Dorsolateral prefrontal cortex (tissue), 120 donors: ENCODE measurements at regions of chr22 and their contacts with region 1.

Region 1: GRCh38 chr22:33302049-33302545 is 243.9 kb upstream of the SYN3 start:
- DNase-seq: peak; percentile 77 to 93 (median 88)
- H3K4me3 ChIP-seq: peak overlapping the region in 21 of 59 donors; percentile 1 to 49 (median 14)
- H3K27ac ChIP-seq: peak overlapping the region in 26 of 59 donors; percentile 4 to 71 (median 44)
- H3K27me3 ChIP-seq: no peaks in the 10 kb centered on the region
- CTCF ChIP-seq: peak; percentile 62 to 97 (median 94)

Region 2: DNA sequence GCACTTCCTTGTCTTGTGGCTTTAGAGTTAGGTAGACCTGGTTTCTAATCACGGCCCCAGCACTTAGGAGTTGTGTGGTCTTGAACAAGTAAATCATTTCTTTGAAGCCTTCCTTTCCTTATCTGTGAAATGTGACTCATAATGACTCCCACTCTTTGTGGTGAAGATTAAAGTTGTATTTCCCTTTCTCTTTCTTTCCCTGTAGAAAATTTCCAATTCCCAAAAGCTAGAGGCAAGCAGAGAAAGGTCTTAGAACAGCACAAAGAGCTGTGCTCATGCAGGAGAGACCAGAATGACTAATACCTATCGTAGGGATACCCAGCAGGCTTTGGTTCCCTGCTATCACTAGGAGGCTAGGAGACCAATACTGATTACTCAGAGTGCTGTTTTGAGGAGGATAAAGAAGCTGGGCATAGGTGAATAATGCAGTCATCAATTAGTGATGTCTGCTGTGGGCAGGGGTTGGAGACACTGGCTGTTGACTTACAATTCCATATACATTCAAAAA is 26.7 kb after region 1 on chr22:
- intact Hi-C with region 1: no loop called
- DNase-seq: no peak
- H3K4me3 ChIP-seq: no peak overlapping the region
- H3K27ac ChIP-seq: peak overlapping the region in 15 of 59 donors; percentile 1 to 49 (median 20)
- H3K27me3 ChIP-seq: no peaks in the 10 kb centered on the region
- CTCF ChIP-seq: no peak

Region 3: DNA sequence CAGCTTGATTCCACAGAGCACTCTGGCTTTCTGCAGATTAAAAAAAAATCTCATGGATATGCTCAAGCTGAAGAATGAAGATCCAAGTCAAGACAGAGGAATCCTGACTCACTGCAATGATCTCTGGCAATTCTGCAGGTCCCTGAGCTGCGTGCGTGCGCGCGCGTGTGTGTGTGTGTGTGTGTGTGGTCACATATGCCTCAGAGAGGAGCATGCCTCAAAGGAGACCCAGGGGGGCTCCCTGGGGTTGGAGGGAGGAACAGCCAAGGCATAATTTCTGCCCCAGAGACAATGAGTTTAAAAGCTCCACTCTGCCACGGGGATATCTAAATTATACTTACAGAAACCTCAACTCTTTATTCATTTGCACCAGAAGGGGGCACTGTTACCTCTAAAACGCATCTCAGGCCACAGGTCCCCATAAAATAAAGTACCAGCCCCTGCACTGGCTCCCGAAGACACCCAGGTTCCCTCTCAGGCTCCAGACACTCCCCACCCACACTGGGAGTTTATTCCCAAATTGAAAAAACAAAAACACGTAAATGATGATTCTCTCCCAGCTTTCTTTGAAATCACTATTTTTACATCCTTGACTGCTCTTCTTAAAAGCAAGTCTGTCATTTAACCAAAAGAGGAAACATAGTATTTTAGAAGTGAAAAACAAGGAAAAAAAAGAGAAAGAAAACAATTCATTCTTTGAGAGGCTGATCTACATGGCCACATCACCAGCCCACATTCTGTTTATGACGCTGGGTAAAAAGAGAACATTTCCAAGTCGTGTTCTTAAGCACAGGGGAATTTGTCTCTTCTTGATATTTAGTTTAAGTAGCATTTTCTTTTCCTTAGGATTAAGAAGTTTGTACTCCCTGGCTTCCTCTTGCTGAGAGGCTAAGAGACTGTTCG is 217.2 kb after region 1 on chr22:
- intact Hi-C with region 1: loop called in 1 of 2 experiments (anchors 5 kb)
- DNase-seq: peak in 3 of 10 donors; percentile 25 to 45 (median 33)
- H3K4me3 ChIP-seq: peak overlapping the region in 11 of 59 donors; percentile 3 to 41 (median 25)
- H3K27ac ChIP-seq: peak overlapping the region in 15 of 59 donors; percentile 6 to 76 (median 29)
- H3K27me3 ChIP-seq: no peaks in the 10 kb centered on the region
- CTCF ChIP-seq: peak; percentile 54 to 94 (median 75)

Region 4: GRCh38 chr22:33920927-33921524 is 618.9 kb after region 1 on chr22:
- intact Hi-C with region 1: loop called in 1 of 2 experiments (anchors 5 kb)
- DNase-seq: peak; percentile 95 to 100 (median 99)
- H3K4me3 ChIP-seq: peak overlapping the region; percentile 34 to 97 (median 74)
- H3K27ac ChIP-seq: peak overlapping the region in 58 of 59 donors; percentile 38 to 92 (median 80)
- H3K27me3 ChIP-seq: no peaks in the 10 kb centered on the region
- CTCF ChIP-seq: peak in 22 of 56 donors; percentile 4 to 44 (median 22)

Region 5: GRCh38 chr22:34111210-34111824 is 809.2 kb after region 1 on chr22:
- intact Hi-C with region 1: loop called (anchors 10 kb)
- DNase-seq: peak in 2 of 10 donors; percentile 3 to 37
- H3K4me3 ChIP-seq: no peak overlapping the region
- H3K27ac ChIP-seq: no peak overlapping the region
- H3K27me3 ChIP-seq: peaks cover 0 to 13% (median 0%) of the 10 kb centered on the region in 45 donors
- CTCF ChIP-seq: peak; percentile 16 to 75 (median 63)

Region 6: GRCh38 chr22:35023692-35024363 is 1721.7 kb after region 1 on chr22:
- intact Hi-C with region 1: loop called (anchors 10 kb)
- DNase-seq: peak; percentile 46 to 82 (median 74)
- H3K4me3 ChIP-seq: peak overlapping the region in 18 of 59 donors; percentile 1 to 34 (median 20)
- H3K27ac ChIP-seq: no peak overlapping the region
- H3K27me3 ChIP-seq: peaks cover 0 to 26% (median 0%) of the 10 kb centered on the region in 45 donors
- CTCF ChIP-seq: peak; percentile 70 to 96 (median 88)